ENCODE measurements at regions of chr12 and their contacts with region 1.

Region 1: DNA sequence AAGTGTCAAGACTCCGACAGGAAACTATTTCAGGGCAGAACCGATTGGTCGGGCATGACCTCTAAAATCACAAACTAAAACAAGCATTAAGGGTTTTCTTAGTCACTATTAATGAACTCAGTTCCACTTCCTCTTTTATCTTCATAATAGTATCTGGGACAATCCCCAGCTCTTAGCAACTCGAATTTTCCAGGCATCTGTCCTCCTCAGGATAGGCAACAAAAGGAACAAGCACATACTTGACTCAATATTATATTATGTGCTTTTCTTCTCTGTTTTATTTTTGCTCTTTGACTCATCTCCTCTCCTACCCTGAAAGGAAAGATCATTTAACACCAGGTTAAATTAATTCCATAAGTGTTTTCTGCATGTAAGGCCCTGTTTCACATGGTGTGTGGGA is 638.3 kb upstream of the TBX3 start:
- DNase-seq: no peak
- H3K4me3 ChIP-seq: no peak overlapping the region
- H3K27ac ChIP-seq: no peak overlapping the region
- H3K4me1 ChIP-seq: peaks cover 6 to 18% of the 10 kb centered on the region in 2 donors
- H3K27me3 ChIP-seq: no peaks in the 10 kb centered on the region
- CTCF ChIP-seq: no peak

Region 2: GRCh38 chr12:115341442-115341841 is 19.2 kb after region 1 on chr12:
- intact Hi-C with region 1: no loop called
- DNase-seq: peak; percentile 50 to 93
- H3K4me3 ChIP-seq: no peak overlapping the region
- H3K27ac ChIP-seq: peak overlapping the region; percentile 41 to 51
- H3K4me1 ChIP-seq: peaks cover 0 to 5% of the 10 kb centered on the region in 2 donors
- H3K27me3 ChIP-seq: no peaks in the 10 kb centered on the region
- CTCF ChIP-seq: no peak

Region 3: DNA sequence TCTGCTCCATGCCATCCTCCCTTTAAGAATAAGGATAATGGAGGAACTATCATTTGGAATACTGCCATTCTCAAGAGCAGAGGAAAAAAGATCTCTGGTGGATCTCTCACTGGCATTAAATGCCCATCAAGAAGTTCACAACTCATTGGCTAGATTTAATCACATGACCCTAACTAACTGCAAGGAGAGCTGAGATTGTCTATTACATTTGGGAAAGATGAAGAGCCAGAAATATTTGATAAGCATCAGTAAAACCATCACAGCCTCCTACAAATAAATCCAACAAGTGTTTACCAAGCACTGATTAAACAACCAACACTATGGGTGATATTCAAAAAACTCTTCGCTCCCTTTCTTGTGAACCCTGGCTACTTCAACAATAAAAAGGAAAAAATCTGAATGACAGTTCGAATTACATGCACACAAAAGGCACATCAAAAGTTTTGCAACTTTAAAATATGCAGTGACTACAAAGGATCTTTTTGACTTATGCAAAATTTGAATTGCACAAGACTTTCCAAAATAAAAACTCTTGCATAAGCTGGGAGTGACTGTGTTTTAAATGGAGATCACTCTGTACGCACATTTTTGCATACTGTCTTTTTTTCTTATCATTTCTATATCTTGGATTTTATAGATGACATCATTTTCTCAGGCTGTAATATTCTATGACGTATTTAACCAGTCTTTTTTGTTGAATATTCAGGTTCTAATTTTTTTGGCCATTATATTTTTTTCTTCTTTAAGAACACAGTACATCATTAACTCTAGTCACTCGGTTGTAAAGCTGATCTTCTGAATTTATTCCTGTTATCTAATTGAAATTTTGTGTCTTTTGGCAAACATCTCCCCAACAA is 29.2 kb after region 1 on chr12:
- intact Hi-C with region 1: no loop called
- DNase-seq: no peak
- H3K4me3 ChIP-seq: no peak overlapping the region
- H3K27ac ChIP-seq: no peak overlapping the region
- H3K4me1 ChIP-seq: no peaks in the 10 kb centered on the region
- H3K27me3 ChIP-seq: no peaks in the 10 kb centered on the region
- CTCF ChIP-seq: no peak

Region 4: DNA sequence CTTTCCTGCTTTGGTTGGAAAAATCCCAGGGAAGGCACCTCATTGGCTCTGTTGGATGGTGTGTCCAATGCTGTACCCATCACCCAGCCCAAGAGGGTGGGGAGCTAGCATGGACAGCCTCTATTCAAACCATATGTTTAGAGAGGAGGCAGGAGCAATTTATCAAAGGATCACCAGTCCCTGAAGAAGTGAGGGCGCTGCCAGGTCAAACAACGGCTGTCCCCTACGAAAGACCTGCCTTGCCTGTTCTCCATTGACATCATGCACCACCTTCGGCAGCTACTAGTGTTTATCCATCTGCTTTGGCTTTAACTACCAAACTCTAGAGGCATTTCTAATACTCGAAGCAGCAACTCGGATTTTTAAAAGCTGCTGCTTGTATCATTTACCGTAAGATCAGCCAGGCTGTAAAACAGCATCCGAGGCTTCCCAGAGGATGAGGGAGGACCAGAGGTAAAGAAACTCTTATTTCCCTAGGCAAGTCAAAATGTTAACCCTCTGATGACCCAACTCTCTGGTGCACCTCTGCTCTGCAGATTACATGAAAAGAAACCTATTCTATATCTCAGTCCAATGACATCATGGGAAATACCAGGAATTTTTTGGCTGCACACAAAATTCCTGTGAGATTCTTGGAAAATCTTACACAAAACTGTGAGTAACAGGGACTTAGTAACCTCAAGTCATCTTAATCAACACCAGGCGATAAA is 82.6 kb after region 1 on chr12:
- intact Hi-C with region 1: loop called (anchors 5 kb)
- DNase-seq: no peak
- H3K4me3 ChIP-seq: peak overlapping the region; percentile 21 to 35
- H3K27ac ChIP-seq: peak overlapping the region; percentile 47 to 66
- H3K4me1 ChIP-seq: peaks cover 0 to 4% of the 10 kb centered on the region in 2 donors
- H3K27me3 ChIP-seq: no peaks in the 10 kb centered on the region
- CTCF ChIP-seq: no peak

Region 5: GRCh38 chr12:115456946-115457689 is 134.8 kb after region 1 on chr12:
- intact Hi-C with region 1: no loop called
- DNase-seq: no peak
- H3K4me3 ChIP-seq: no peak overlapping the region
- H3K27ac ChIP-seq: no peak overlapping the region
- H3K4me1 ChIP-seq: no peaks in the 10 kb centered on the region
- H3K27me3 ChIP-seq: no peaks in the 10 kb centered on the region
- CTCF ChIP-seq: no peak

Measured in ascending aorta (tissue), 2 donors.